Activated naive CD4-positive, alpha-beta T cell treated with anti-CD3 and anti-CD28 coated beads for 36 hours (primary cell): ENCODE measurements at regions of chr19 and their contacts with region 1.

Region 1: DNA sequence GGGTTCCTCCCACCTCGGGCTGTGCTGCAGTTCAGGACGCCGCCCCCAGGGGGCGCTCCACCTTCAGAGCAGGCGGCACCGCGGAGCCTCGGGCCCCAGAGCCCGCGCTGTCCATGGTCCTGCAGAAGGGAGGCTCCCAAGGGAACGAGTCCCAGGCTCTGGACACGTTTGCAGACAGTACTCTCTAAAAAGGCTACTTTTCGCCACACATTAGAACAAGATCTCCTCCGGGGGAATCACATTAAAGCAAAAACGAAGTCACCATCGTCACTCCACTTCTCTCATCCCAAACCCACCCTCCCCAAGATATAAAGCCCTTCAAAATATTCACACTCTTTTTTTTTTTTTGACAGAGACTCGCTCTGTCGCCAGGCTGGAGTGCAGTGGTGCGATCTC is 4.6 kb upstream of the SIGLEC10 start:
- DNase-seq: peak; percentile 91
- H3K4me3 Mint-ChIP-seq: no peak overlapping the region
- H3K27ac Mint-ChIP-seq: no peak overlapping the region
- H3K4me1 Mint-ChIP-seq: peaks cover 8% of the 10 kb centered on the region
- H3K27me3 Mint-ChIP-seq: peaks cover 24% of the 10 kb centered on the region

Region 2: GRCh38 chr19:51305479-51305878 is 116.6 kb before region 1 on chr19:
- CTCF ChIA-PET with region 1: no interaction called
- intact Hi-C with region 1: no loop called
- DNase-seq: no peak
- H3K4me3 Mint-ChIP-seq: no peak overlapping the region
- H3K27ac Mint-ChIP-seq: no peak overlapping the region
- H3K4me1 Mint-ChIP-seq: no peaks in the 10 kb centered on the region
- H3K27me3 Mint-ChIP-seq: peaks cover 28% of the 10 kb centered on the region

Region 3: GRCh38 chr19:51367565-51368365 is 54.3 kb before region 1 on chr19:
- CTCF ChIA-PET with region 1: no interaction called
- intact Hi-C with region 1: no loop called
- DNase-seq: peak; percentile 99
- H3K4me3 Mint-ChIP-seq: peak overlapping the region; percentile 94
- H3K27ac Mint-ChIP-seq: peak overlapping the region; percentile 95
- H3K4me1 Mint-ChIP-seq: peaks cover 58% of the 10 kb centered on the region
- H3K27me3 Mint-ChIP-seq: no peaks in the 10 kb centered on the region

Region 4: DNA sequence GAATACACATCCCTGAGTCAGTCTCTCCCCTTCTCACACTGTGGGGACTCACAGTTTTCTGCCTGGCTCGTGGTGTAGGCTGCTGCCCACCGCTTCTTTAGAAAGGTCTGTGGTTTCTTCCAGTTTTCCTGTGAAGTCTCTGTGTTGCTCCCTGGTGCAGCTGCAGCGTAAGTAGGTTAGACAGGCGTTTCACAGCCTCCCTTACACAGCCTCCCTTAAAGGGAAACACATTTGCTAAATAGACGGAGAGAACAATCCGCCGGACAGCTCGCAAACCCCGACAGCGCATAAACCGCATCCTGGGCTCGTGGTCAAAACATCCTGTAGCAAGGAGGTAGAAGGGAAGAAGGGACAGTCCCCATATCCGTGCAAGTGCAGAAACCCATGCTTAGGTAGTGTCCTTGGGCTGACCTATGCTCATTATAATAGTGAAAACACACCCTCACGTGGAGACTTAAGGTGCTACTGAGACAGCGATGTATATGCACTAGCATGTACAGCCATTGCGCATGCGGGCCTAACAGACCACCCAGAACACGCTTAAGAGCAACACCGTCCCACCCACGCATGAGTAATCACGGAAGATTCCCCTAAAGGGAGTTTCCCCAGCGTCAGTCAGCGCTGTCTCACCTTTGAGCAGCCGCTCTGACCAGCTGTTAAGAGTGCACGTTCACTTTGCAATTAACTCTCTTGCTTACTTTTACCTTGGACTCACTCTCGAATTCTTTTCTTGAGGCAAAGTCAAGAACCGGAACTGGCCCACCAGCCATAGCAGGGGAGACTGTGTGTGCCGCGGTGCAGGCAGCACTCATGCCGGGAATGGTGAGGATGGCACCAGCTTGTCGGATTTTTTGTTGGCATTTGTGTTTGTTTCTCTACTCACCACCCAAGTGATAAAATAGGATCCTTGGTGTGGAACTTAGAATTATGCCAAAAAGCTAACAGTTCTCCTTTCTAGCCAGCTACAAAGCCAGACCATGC is 19.6 kb after region 1 on chr19:
- CTCF ChIA-PET with region 1: interaction called, 12 read pairs
- intact Hi-C with region 1: loop called (anchors 1 kb)
- DNase-seq: peak; percentile 95
- H3K4me3 Mint-ChIP-seq: peak overlapping the region; percentile 62
- H3K27ac Mint-ChIP-seq: peak overlapping the region; percentile 87
- H3K4me1 Mint-ChIP-seq: peaks cover 43% of the 10 kb centered on the region
- H3K27me3 Mint-ChIP-seq: peaks cover 4% of the 10 kb centered on the region

Region 5: GRCh38 chr19:51514866-51515481 is 92.9 kb after region 1 on chr19:
- CTCF ChIA-PET with region 1: interaction called, 5 read pairs
- intact Hi-C with region 1: loop called (anchors 1 kb)
- DNase-seq: peak; percentile 31
- H3K4me3 Mint-ChIP-seq: no peak overlapping the region
- H3K27ac Mint-ChIP-seq: no peak overlapping the region
- H3K4me1 Mint-ChIP-seq: no peaks in the 10 kb centered on the region
- H3K27me3 Mint-ChIP-seq: peaks cover 15% of the 10 kb centered on the region

Region 6: DNA sequence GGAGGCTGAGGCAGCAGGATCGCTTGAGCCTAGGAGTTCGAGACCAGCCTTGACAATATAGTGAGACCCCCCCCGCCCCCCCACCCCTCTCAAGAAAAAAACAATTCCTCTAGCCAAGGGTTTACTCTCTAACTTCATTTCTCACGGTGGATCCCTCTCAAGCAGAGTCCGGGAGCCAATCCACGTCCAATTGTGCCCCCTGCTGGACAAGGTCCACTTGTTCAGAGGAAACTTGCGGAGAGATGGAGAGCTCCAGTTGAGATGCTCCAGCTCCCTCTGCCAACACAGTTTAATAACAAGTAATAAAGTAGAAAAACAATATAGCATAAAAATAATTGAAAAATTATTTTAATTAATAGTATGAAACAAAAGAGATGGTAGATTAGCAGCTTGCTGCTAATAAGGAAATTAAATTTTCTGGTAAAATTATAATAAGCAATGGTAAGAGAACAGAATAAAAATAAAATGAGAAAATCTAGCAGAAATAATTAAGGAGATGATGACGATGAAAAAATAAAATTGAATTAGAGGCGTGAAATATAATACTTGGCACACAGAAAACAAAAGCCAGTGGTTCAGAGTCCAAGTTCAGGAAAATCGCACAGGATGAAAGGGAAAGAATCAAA is 239.0 kb after region 1 on chr19:
- CTCF ChIA-PET with region 1: interaction called, 14 read pairs
- intact Hi-C with region 1: loop called (anchors 1 kb)
- DNase-seq: peak; percentile 89
- H3K4me3 Mint-ChIP-seq: no peak overlapping the region
- H3K27ac Mint-ChIP-seq: no peak overlapping the region
- H3K4me1 Mint-ChIP-seq: peaks cover 5% of the 10 kb centered on the region
- H3K27me3 Mint-ChIP-seq: peaks cover 19% of the 10 kb centered on the region